SK-N-SH (cell line): ENCODE measurements at regions of chr7 and their contacts with region 1.

Region 1: DNA sequence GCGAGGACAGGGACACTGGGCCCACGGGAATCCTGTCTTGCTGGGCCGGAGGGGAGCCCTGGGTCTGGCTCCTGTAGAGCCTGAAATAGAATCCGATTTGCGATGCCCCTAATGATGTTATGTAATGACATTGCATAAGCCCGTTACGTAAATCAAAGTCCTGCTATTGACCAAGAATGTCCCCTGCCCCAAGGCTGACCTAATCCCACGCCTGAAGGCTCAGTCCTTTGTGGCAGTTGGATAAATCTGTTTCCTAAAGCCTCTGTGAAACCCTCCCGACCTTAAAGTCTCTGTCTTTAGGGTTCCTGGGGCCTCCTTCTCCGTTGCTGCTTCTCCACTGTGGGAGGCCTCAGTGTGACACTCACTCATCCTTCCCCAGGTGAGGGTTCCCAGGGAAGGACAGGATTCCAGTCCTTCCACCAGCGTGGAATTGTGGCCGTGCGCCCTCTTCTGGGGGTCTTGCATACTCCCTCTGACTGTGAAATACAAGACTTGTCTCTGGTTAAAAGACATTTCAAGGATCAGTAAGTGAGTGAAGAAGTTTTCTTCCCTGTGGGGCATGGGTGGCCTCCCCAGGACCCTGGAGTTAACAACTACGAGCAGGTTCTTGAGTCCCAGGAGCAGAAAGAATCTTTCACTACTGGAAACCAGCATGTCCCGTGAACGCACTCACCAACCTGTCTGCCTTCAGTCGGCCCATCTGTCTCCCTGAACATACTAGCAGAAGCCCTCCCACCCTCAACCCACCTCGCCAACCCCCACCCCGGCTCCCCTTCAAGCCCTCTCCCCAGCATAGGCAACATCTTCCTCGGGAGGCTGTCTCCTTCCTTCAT is 19.8 kb downstream of the ZNF467 start:
- DNase-seq: peak; percentile 71
- H3K4me3 ChIP-seq: peak overlapping the region in 1 of 2 experiments; percentile 45; a peak in 1 of 4 replicates
- H3K27ac ChIP-seq: no peak overlapping the region
- H3K4me1 ChIP-seq: no peaks in the 10 kb centered on the region
- H3K27me3 ChIP-seq: peaks cover under 1% of the 10 kb centered on the region; the same call in 1 of the 2 replicates
- CTCF ChIP-seq: peak; percentile 80
- EP300 ChIP-seq: no peak
- RAD21 ChIP-seq: peak; percentile 73

Region 2: DNA sequence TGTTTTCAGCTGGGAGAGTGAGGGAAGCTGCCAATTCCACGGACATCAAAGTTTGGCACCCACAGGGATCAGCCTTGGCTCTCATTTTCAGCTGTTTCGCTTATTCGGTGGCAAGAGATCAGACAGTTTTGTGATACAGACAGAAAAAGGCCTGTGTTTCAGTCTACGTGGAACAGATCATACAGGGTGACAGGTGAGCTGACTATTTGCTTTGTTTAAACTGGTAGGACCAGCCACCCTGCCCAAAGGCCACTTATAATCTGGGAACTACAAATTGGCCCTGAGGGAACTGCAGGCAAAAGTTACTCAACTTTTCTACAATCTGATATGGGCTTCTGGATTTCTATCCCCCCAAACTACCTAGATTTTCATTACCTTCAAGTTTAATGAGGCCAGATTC is 108.8 kb before region 1 on chr7:
- CTCF ChIA-PET with region 1: no interaction called
- POLR2A ChIA-PET with region 1: no interaction called
- DNase-seq: no peak
- H3K4me3 ChIP-seq: no peak overlapping the region
- H3K27ac ChIP-seq: no peak overlapping the region
- H3K4me1 ChIP-seq: no peaks in the 10 kb centered on the region; a peak in 1 of 4 replicates
- H3K27me3 ChIP-seq: peaks cover 15% of the 10 kb centered on the region; the same call in 1 of the 2 replicates
- CTCF ChIP-seq: no peak
- EP300 ChIP-seq: no peak
- RAD21 ChIP-seq: no peak

Region 3: DNA sequence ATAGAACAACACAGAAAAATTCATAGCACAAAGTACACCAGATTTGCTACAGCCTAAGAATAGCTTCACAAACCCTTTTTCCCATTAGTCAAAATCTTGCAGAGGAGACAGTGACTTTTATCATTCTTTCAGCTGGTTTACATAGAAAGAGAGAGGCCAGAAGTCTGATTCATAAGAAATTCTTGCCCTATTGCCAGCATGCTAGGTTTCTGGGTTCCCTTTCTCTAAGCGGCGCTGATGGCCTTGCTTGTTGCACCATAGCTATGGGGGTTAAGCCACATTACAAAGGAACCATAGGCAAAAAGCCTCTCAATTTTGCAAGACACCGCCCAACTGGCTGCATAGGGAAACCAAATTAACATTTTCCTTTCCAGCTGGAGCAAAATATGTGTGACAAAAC is 67.6 kb before region 1 on chr7:
- CTCF ChIA-PET with region 1: no interaction called
- POLR2A ChIA-PET with region 1: no interaction called
- DNase-seq: no peak
- H3K4me3 ChIP-seq: no peak overlapping the region
- H3K27ac ChIP-seq: no peak overlapping the region
- H3K4me1 ChIP-seq: no peaks in the 10 kb centered on the region; a peak in 1 of 4 replicates
- H3K27me3 ChIP-seq: no peaks in the 10 kb centered on the region; the same call in 1 of the 2 replicates
- CTCF ChIP-seq: no peak
- EP300 ChIP-seq: no peak
- RAD21 ChIP-seq: no peak

Region 4: GRCh38 chr7:149764481-149765398 is 11.1 kb after region 1 on chr7:
- CTCF ChIA-PET with region 1: interaction called, 27 read pairs
- POLR2A ChIA-PET with region 1: no interaction called
- DNase-seq: peak; percentile 79
- H3K4me3 ChIP-seq: peak overlapping the region in 1 of 2 experiments; percentile 2; a peak in 1 of 4 replicates
- H3K27ac ChIP-seq: no peak overlapping the region
- H3K4me1 ChIP-seq: peaks cover 0 to 11% of the 10 kb centered on the region in 2 experiments; a peak in 1 of 4 replicates
- H3K27me3 ChIP-seq: peaks cover 91% of the 10 kb centered on the region
- CTCF ChIP-seq: peak; percentile 18
- EP300 ChIP-seq: no peak
- RAD21 ChIP-seq: no peak; the same call in 1 of the 2 replicates

Region 5: DNA sequence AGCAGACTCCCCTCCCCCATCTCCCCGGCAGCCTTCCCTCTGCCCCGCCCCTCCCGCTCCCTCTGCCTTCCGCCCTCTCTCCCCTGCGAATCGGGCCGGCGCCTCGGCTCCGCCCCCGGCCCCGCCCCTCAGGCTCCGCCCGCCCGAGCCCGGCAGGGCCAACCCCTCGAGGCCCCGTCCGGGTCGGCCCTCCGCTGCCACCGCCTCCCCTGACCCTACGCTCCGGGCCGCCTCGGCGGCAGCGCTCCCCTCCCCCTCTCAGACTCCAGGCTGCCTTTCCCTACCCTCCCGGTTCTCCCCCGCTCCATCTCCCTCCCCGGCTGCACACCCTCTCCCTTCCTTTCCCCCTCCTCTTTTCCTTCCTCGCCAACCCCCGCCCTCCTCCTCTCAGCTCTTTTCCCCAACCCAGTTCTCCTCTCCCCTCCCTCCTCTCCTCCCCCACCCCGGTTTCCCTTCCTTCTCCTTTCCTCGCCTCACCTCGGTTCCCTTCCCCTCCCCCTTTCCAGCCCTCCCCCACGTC is 18.2 kb after region 1 on chr7:
- CTCF ChIA-PET with region 1: interaction called, 10 read pairs
- POLR2A ChIA-PET with region 1: no interaction called
- DNase-seq: peak; percentile 99
- H3K4me3 ChIP-seq: peak overlapping the region; percentile 61 to 65
- H3K27ac ChIP-seq: peak overlapping the region in 1 of 2 experiments; percentile 74; a peak in 1 of 4 replicates
- H3K4me1 ChIP-seq: peaks cover 4 to 33% of the 10 kb centered on the region in 2 experiments; a peak in 1 of 4 replicates
- H3K27me3 ChIP-seq: peaks cover 21% of the 10 kb centered on the region
- CTCF ChIP-seq: no peak
- EP300 ChIP-seq: no peak
- RAD21 ChIP-seq: no peak